ENCODE measurements at regions of chr9 and their contacts with region 1.

Region 1: DNA sequence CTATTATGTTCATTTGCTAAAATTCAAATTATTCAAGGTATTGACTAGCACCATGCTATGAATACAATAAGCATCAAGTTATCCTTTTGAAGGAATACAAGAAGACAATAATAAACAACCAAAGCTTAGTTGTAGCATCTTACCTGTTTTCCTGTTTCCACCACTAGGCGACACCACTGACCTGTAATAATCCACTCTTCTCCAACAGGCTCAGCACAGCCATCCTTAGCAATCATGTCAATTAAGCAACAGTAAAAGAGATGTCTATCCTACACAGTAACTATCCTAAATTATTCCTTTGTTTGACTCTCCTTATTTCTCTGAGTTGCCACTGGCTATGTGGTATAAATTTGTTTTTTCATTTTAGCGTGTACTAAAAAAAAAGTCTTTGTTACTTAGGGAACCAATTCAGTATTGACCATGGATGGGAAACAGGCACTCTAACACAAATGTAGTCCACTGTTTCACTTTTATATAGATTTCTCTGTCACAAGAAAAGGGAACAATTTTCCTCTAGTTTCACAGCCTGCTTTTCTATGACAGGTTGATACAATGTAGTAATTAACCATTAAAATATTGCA is 46.2 kb downstream of the PCA3 start:
- DNase-seq: peak; percentile 49 to 76 (median 66)
- H3K4me3 ChIP-seq: no peak overlapping the region
- H3K27ac ChIP-seq: no peak overlapping the region
- H3K4me1 ChIP-seq: no peaks in the 10 kb centered on the region
- H3K27me3 ChIP-seq: peaks cover 0 to 21% (median 8%) of the 10 kb centered on the region in 5 experiments

Region 2: GRCh38 chr9:76835571-76836283 is 25.3 kb after region 1 on chr9:
- CTCF ChIA-PET with region 1: no interaction called
- POLR2A ChIA-PET with region 1: no interaction called
- DNase-seq: no peak
- H3K4me3 ChIP-seq: no peak overlapping the region
- H3K27ac ChIP-seq: no peak overlapping the region
- H3K4me1 ChIP-seq: no peaks in the 10 kb centered on the region
- H3K27me3 ChIP-seq: peaks cover 0 to 5% (median 0%) of the 10 kb centered on the region in 5 experiments

Region 3: GRCh38 chr9:76866689-76867088 is 56.2 kb after region 1 on chr9:
- CTCF ChIA-PET with region 1: no interaction called
- POLR2A ChIA-PET with region 1: no interaction called
- DNase-seq: no peak
- H3K4me3 ChIP-seq: no peak overlapping the region
- H3K27ac ChIP-seq: no peak overlapping the region
- H3K4me1 ChIP-seq: no peaks in the 10 kb centered on the region
- H3K27me3 ChIP-seq: peaks cover 2 to 25% (median 11%) of the 10 kb centered on the region in 5 experiments

Region 4: DNA sequence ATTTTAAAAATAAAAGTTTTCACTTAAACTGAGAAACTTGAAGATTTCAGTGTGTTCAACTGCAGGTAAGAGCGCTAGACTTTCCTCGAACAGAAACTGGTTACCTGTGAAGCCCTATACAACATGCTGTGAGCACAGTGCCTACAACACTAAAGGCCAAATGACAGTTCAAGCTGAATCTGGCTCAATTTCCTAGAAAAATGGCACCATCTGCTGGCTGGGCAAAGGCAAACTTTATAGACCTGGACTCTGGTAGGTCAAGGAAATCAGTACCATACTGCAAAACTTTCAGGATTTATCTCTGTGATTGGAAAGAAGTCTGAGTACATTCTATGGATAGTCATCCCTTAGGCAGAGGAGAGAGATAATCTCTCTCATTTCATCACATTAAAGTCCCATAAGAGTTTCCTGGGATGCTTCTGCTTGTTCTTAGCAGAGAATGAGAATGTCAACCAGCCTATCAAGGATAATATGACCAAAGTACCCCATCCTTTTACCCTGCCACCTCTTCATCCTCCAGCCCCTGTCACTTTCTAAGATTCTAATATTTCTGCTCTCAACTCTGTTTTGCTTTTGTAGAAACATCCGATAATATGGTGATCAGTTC is 177.2 kb after region 1 on chr9:
- CTCF ChIA-PET with region 1: interaction called, 12 read pairs
- POLR2A ChIA-PET with region 1: no interaction called
- DNase-seq: peak; percentile 31 to 47 (median 37)
- H3K4me3 ChIP-seq: no peak overlapping the region
- H3K27ac ChIP-seq: no peak overlapping the region
- H3K4me1 ChIP-seq: no peaks in the 10 kb centered on the region
- H3K27me3 ChIP-seq: peaks cover 2 to 17% (median 6%) of the 10 kb centered on the region in 5 experiments

Region 5: GRCh38 chr9:76996700-76997099 is 186.2 kb after region 1 on chr9:
- CTCF ChIA-PET with region 1: interaction called, 46 read pairs
- POLR2A ChIA-PET with region 1: no interaction called
- DNase-seq: peak in 2 of 3 donors; percentile 54 to 56
- H3K4me3 ChIP-seq: no peak overlapping the region
- H3K27ac ChIP-seq: no peak overlapping the region
- H3K4me1 ChIP-seq: no peaks in the 10 kb centered on the region
- H3K27me3 ChIP-seq: peaks cover 0 to 3% (median 0%) of the 10 kb centered on the region in 5 experiments

Region 6: DNA sequence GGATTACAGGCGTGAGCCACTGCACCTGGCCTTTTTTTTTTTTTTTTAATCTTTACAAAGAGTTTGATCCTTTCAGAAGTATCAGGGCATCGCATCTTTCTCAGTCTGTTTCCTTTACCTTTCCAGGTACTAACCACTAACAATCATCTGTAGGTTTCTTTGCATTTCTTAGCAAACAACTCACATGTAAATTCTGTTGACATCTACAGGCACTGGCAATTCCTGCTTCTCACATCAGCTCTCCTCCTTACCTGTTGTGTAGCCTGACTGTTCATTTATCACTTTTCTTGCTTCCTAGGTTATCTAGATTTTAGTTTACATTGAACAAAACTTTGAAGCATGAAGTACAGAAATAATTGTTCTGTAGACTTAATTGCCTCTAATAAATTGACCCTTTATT is 339.4 kb after region 1 on chr9:
- CTCF ChIA-PET with region 1: interaction called, 10 read pairs
- POLR2A ChIA-PET with region 1: no interaction called
- DNase-seq: no peak
- H3K4me3 ChIP-seq: no peak overlapping the region
- H3K27ac ChIP-seq: no peak overlapping the region
- H3K4me1 ChIP-seq: no peaks in the 10 kb centered on the region
- H3K27me3 ChIP-seq: peaks cover 0 to 6% (median 3%) of the 10 kb centered on the region in 5 experiments